Psoas muscle (tissue), 8 donors: ENCODE measurements at regions of chr3 and their contacts with region 1.

Region 1: GRCh38 chr3:160869818-160870217 is 113.8 kb downstream of the PPM1L start:
- DNase-seq: peak; percentile 39 to 75
- ATAC-seq: peak; percentile 92 to 95 (median 94)
- H3K4me3 ChIP-seq: peak overlapping the region; percentile 61
- H3K27ac ChIP-seq: peak overlapping the region; percentile 94
- H3K4me1 ChIP-seq: peaks cover 61% of the 10 kb centered on the region
- H3K27me3 ChIP-seq: no peaks in the 10 kb centered on the region
- CTCF ChIP-seq: no peak

Region 2: GRCh38 chr3:160629491-160629890 is 240.3 kb before region 1 on chr3:
- intact Hi-C with region 1: no loop called
- DNase-seq: no peak
- ATAC-seq: no peak
- H3K4me3 ChIP-seq: no peak overlapping the region
- H3K27ac ChIP-seq: no peak overlapping the region
- H3K4me1 ChIP-seq: no peaks in the 10 kb centered on the region
- H3K27me3 ChIP-seq: no peaks in the 10 kb centered on the region
- CTCF ChIP-seq: no peak

Region 3: GRCh38 chr3:160801386-160802118 is 68.3 kb before region 1 on chr3:
- intact Hi-C with region 1: loop called in 1 of 2 experiments (anchors 10 kb)
- DNase-seq: peak; percentile 37 to 77
- ATAC-seq: peak; percentile 86 to 90 (median 88)
- H3K4me3 ChIP-seq: peak overlapping the region; percentile 50
- H3K27ac ChIP-seq: peak overlapping the region; percentile 93
- H3K4me1 ChIP-seq: peaks cover 70% of the 10 kb centered on the region
- H3K27me3 ChIP-seq: no peaks in the 10 kb centered on the region
- CTCF ChIP-seq: no peak

Region 4: DNA sequence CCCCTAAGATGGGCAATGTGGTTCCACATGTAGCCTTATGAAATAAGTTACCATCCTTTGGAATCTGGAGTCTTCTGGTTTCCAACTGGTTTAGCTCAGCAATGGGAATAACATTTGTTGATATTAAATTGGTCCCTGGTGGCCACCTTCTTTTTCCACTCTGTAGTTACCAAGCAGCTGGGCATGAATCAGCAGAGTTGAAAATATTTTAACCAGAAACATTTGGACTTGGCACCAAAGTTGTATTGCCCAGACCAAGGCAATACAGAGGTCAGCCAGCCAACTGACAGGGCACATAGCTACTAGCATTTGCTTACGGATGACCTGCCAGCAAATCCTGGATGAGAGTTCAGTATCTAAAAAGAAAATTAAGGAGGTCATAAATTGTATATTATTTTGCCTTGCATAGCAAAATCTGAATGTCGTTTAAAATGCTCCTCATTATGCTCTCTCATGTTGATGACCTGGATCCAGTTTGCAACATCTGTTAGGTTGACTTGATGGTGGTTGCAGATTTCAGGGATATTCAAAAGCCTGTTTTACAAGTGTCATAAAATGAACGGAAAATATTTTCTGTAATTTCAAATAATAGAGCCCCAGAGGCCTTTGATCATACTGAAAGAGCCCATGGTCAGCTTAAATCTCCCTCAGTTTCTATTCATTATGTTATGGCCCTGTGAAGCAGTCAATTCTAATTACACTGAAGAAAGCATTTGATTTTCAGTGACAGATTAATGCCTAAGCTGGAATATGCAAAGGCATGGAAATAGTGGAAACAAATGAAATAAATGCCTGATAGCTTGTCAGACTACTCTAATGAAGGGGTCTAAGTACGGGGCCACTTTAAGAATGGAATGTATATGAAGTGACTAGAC is 59.2 kb before region 1 on chr3:
- intact Hi-C with region 1: loop called (anchors 5 to 10 kb)
- DNase-seq: peak; percentile 23 to 69
- ATAC-seq: peak; percentile 65 to 74 (median 71)
- H3K4me3 ChIP-seq: peak overlapping the region; percentile 9
- H3K27ac ChIP-seq: peak overlapping the region; percentile 92
- H3K4me1 ChIP-seq: peaks cover 82% of the 10 kb centered on the region
- H3K27me3 ChIP-seq: no peaks in the 10 kb centered on the region
- CTCF ChIP-seq: no peak

Region 5: GRCh38 chr3:160885791-160886286 is 16.0 kb after region 1 on chr3:
- intact Hi-C with region 1: loop called in 1 of 2 experiments (anchors 2 kb)
- DNase-seq: peak; percentile 89 to 97
- ATAC-seq: peak; percentile 94 to 97 (median 96)
- H3K4me3 ChIP-seq: peak overlapping the region; percentile 48
- H3K27ac ChIP-seq: peak overlapping the region; percentile 90
- H3K4me1 ChIP-seq: peaks cover 26% of the 10 kb centered on the region
- H3K27me3 ChIP-seq: no peaks in the 10 kb centered on the region
- CTCF ChIP-seq: peak; percentile 44

Region 6: GRCh38 chr3:160921020-160921635 is 51.3 kb after region 1 on chr3:
- intact Hi-C with region 1: loop called in 1 of 2 experiments (anchors 10 kb)
- DNase-seq: peak in 1 of 2 donors; percentile 14
- ATAC-seq: peak in 3 of 4 donors; percentile 65 to 76 (median 75)
- H3K4me3 ChIP-seq: no peak overlapping the region
- H3K27ac ChIP-seq: no peak overlapping the region
- H3K4me1 ChIP-seq: peaks cover 29% of the 10 kb centered on the region
- H3K27me3 ChIP-seq: no peaks in the 10 kb centered on the region
- CTCF ChIP-seq: peak; percentile 71

Region 7: GRCh38 chr3:160941885-160942494 is 72.2 kb after region 1 on chr3:
- intact Hi-C with region 1: no loop called
- DNase-seq: peak in 1 of 2 donors; percentile 16
- ATAC-seq: peak; percentile 81 to 92 (median 87)
- H3K4me3 ChIP-seq: no peak overlapping the region
- H3K27ac ChIP-seq: no peak overlapping the region
- H3K4me1 ChIP-seq: peaks cover 5% of the 10 kb centered on the region
- H3K27me3 ChIP-seq: no peaks in the 10 kb centered on the region
- CTCF ChIP-seq: peak; percentile 93

Region 8: GRCh38 chr3:161137260-161137659 is 267.4 kb after region 1 on chr3:
- intact Hi-C with region 1: no loop called
- DNase-seq: no peak
- ATAC-seq: no peak
- H3K4me3 ChIP-seq: no peak overlapping the region
- H3K27ac ChIP-seq: no peak overlapping the region
- H3K4me1 ChIP-seq: no peaks in the 10 kb centered on the region
- H3K27me3 ChIP-seq: no peaks in the 10 kb centered on the region
- CTCF ChIP-seq: no peak